ENCODE measurements at regions of chr19 and their contacts with region 1.

Region 1: GRCh38 chr19:54481322-54481930 is 8.3 kb upstream of the CDC42EP5 start:
- DNase-seq: peak; percentile 57
- H3K4me3 Mint-ChIP-seq: no peak overlapping the region
- H3K27ac Mint-ChIP-seq: no peak overlapping the region
- H3K4me1 Mint-ChIP-seq: peaks cover 3% of the 10 kb centered on the region
- H3K27me3 Mint-ChIP-seq: peaks cover 19% of the 10 kb centered on the region

Region 2: DNA sequence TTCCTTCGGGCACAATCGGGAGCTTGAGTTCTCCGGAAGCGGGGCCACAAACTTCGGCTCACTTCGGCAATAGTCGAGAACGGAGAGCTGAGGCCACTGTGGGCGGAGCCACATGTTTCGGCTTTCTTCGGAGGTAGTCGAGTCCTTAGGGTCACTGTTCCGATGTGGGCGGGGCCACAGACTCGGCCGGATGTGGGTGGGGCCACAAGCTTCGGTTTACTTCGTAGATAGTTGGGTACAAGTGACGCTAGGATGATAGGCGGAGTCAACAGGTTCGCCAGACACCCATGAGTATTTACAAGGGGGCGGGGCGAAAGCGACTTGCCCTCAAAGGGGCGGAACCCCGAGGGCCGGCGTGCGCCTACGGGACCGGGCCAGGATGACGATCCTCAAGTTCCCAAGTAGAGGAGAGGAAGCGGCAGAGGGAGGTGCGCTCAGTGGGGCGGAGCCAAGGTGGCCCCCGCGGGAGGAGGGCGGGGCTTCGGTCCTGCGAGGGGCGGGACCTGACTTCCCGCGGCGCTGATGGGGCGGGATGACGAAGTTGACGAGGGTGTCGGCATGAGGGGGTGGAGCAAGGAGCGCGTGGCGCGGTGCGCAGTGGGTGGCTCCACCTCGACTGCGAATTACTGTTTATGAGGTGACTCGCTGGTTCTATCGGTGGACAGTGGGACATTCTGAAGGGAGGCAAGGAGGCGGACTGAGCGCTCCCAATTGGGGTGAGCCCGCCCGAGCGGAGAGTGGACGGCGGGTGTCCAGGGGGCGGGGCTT is 291.5 kb before region 1 on chr19:
- CTCF ChIA-PET with region 1: no interaction called
- intact Hi-C with region 1: no loop called
- DNase-seq: peak; percentile 100
- H3K4me3 Mint-ChIP-seq: peak overlapping the region; percentile 82
- H3K27ac Mint-ChIP-seq: peak overlapping the region; percentile 96
- H3K4me1 Mint-ChIP-seq: peaks cover 31% of the 10 kb centered on the region
- H3K27me3 Mint-ChIP-seq: no peaks in the 10 kb centered on the region

Region 3: DNA sequence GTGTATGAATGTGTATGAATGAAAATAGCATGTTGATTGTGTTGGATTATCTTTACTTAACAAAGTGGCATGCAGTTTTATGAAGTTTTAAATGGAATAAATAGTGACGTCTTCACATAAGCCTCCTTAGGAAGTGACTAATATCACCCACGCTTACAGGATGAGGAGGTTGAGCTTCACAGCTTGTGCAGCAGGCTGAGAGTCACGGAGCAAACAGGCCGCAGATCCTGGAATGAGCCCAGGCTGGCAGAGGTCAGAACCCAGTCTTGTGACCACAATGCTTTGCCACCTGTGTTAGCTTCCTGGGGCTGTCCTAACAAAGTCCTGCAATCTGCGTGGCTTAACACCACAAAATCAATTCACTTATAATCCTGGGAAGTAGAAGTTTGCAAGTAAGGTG is 42.0 kb after region 1 on chr19:
- CTCF ChIA-PET with region 1: interaction called, 4 read pairs
- intact Hi-C with region 1: loop called (anchors 5 kb)
- DNase-seq: peak; percentile 83
- H3K4me3 Mint-ChIP-seq: no peak overlapping the region
- H3K27ac Mint-ChIP-seq: peak overlapping the region; percentile 59
- H3K4me1 Mint-ChIP-seq: peaks cover 52% of the 10 kb centered on the region
- H3K27me3 Mint-ChIP-seq: peaks cover 3% of the 10 kb centered on the region

Region 4: GRCh38 chr19:54653181-54653809 is 171.9 kb after region 1 on chr19:
- CTCF ChIA-PET with region 1: interaction called, 4 read pairs
- intact Hi-C with region 1: loop called (anchors 5 kb)
- DNase-seq: no peak
- H3K4me3 Mint-ChIP-seq: no peak overlapping the region
- H3K27ac Mint-ChIP-seq: no peak overlapping the region
- H3K4me1 Mint-ChIP-seq: no peaks in the 10 kb centered on the region
- H3K27me3 Mint-ChIP-seq: no peaks in the 10 kb centered on the region

Region 5: DNA sequence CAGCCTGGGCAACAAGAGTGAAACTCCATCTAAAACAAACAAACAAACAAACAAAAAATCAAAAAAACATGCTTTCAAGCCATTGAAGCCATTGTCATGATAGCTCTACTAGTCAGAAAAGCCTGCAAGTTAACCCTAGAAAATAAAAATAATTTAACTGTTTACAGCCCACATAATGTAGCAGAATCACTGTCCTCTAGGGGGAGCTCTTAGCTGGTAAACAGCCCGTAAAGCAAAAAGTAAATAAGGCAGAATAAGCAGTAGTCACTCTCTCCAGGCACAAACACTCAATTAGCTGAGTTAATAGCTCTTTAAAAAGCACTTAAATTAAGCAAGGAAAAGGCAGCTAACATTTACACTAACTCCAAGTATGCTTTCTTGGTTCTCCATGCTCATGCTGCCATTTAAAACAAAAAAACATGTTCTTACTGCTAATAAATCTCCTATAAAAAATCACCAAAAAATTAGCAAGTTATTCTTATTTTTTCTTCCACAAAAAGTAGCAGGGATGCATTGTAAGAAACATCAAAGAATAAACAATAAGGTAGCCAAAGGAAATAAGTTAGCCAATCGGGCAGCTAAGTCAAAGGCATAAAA is 192.7 kb after region 1 on chr19:
- CTCF ChIA-PET with region 1: interaction called, 62 read pairs
- intact Hi-C with region 1: loop called (anchors 1 kb)
- DNase-seq: no peak
- H3K4me3 Mint-ChIP-seq: no peak overlapping the region
- H3K27ac Mint-ChIP-seq: no peak overlapping the region
- H3K4me1 Mint-ChIP-seq: no peaks in the 10 kb centered on the region
- H3K27me3 Mint-ChIP-seq: peaks cover 15% of the 10 kb centered on the region

Region 6: GRCh38 chr19:54682306-54682856 is 201.0 kb after region 1 on chr19:
- CTCF ChIA-PET with region 1: interaction called, 62 read pairs
- intact Hi-C with region 1: no loop called
- DNase-seq: no peak
- H3K4me3 Mint-ChIP-seq: no peak overlapping the region
- H3K27ac Mint-ChIP-seq: no peak overlapping the region
- H3K4me1 Mint-ChIP-seq: no peaks in the 10 kb centered on the region
- H3K27me3 Mint-ChIP-seq: peaks cover 8% of the 10 kb centered on the region